Activated T-helper 1 cell treated with anti-CD3 and anti-CD28 coated beads, Interleukin-12 subunit alpha, Interleukin-12 subunit beta, Interleukin-2, Interleukin-4 antibody, amounts not matched to agents 30 ng/mL and 10 ng/mL and 1 ng/mL, durations not matched to agents 14 hours and 24 hours and 36 hours (primary cell): ENCODE measurements at regions of chr3 and their contacts with region 1.

Region 1: DNA sequence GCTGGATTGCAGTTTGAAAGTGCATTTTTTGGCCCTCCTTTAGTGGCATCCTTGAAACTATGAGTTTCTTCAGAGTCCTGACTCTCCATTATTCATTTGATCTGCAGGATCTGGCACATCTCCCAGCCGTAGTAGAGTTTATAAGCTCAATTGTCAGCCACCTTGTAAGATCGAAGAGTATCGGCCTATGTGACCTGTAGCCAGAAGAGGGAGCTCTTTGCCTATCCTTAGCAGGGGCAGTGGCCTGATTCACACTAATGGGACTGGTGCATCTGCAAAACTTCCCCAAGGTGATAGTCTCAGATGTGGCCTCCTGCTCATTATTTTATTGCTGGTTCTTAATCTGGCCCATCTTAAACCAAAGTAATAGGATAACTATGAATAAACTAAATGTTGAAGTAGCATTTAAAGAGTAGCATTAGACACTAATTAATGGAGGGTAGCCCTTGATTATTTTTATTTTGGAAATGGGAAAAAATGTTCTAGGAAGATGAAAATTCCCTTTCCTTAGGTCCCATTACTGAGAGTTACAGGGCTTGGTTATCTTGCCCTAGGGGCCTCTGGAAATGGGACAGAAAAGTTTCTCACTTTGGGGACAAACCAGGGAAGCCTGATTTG is 21.2 kb downstream of the GCSAM start:
- DNase-seq: peak; percentile 48
- H3K4me3 Mint-ChIP-seq: no peak overlapping the region
- H3K27ac Mint-ChIP-seq: no peak overlapping the region
- H3K4me1 Mint-ChIP-seq: peaks cover 17% of the 10 kb centered on the region
- H3K27me3 Mint-ChIP-seq: no peaks in the 10 kb centered on the region

Region 2: GRCh38 chr3:112074721-112075497 is 37.0 kb before region 1 on chr3:
- intact Hi-C with region 1: no loop called
- DNase-seq: peak; percentile 33
- H3K4me3 Mint-ChIP-seq: peak overlapping the region; percentile 61
- H3K27ac Mint-ChIP-seq: peak overlapping the region; percentile 68
- H3K4me1 Mint-ChIP-seq: peaks cover 49% of the 10 kb centered on the region
- H3K27me3 Mint-ChIP-seq: peaks cover 2% of the 10 kb centered on the region

Region 3: GRCh38 chr3:112136959-112137693 is 25.2 kb after region 1 on chr3:
- intact Hi-C with region 1: loop called (anchors 1 kb)
- DNase-seq: no peak
- H3K4me3 Mint-ChIP-seq: no peak overlapping the region
- H3K27ac Mint-ChIP-seq: peak overlapping the region; percentile 6
- H3K4me1 Mint-ChIP-seq: peaks cover 54% of the 10 kb centered on the region
- H3K27me3 Mint-ChIP-seq: no peaks in the 10 kb centered on the region

Region 4: DNA sequence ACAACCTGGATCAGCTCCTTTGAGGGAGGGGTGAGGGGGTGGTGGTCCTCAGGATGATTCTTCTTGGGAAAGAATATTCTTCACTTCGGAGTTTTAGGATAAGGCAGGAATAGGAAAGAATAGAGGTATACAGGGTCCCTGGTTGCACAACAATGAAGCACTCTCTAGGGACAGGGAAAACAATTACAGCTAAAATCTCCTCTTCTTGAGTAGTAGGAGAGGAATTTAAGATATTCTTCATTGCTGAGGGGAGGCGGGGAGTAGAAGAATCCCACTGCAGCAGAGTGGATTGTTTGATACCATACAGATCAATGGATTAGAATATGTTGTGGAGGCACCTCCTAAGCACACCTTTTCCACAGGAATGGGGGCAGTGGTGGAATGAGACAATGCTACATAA is 161.6 kb after region 1 on chr3:
- intact Hi-C with region 1: no loop called
- DNase-seq: no peak
- H3K4me3 Mint-ChIP-seq: no peak overlapping the region
- H3K27ac Mint-ChIP-seq: no peak overlapping the region
- H3K4me1 Mint-ChIP-seq: no peaks in the 10 kb centered on the region
- H3K27me3 Mint-ChIP-seq: peaks cover 18% of the 10 kb centered on the region

Region 5: GRCh38 chr3:112293368-112294321 is 181.8 kb after region 1 on chr3 and contains the start of gene SLC9C1:
- intact Hi-C with region 1: loop called (anchors 1 kb)
- DNase-seq: peak; percentile 36
- H3K4me3 Mint-ChIP-seq: peak within 1 kb of the TSS; percentile 72
- H3K27ac Mint-ChIP-seq: peak within 1 kb of the TSS; percentile 79
- H3K4me1 Mint-ChIP-seq: peaks cover 49% of the 10 kb centered on the region
- H3K27me3 Mint-ChIP-seq: no peaks in the 10 kb centered on the region
- total RNA-seq, gene SLC9C1: not detected in 2 replicates

Region 6: DNA sequence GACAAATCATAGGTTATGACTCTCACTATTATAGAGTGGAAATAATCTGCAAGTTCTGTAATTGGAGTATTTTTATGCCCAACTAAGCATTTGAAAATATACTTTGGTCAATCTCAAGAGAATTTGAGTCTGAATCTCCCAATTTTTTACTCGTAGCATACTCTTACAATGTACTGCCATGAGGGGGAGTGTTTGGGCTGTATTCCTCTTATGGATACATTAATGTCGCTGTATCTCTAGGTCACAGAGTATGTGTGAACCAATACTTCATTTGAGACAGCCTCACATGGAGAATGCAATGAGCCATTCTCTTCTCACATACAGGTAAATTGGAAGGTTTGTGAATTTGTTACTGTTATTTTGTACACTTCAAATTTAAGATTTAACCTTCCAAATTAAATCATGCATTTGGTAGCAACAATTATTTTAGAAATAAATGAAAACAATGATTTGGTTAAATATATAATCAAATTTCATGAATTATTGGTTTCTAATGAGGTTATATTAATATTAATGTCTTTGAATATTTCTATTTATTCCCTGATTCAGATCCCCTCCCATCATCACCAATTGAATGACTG is 215.6 kb after region 1 on chr3:
- intact Hi-C with region 1: loop called (anchors 1 kb)
- DNase-seq: peak; percentile 38
- H3K4me3 Mint-ChIP-seq: no peak overlapping the region
- H3K27ac Mint-ChIP-seq: no peak overlapping the region
- H3K4me1 Mint-ChIP-seq: no peaks in the 10 kb centered on the region
- H3K27me3 Mint-ChIP-seq: peaks cover 1% of the 10 kb centered on the region

Region 7: DNA sequence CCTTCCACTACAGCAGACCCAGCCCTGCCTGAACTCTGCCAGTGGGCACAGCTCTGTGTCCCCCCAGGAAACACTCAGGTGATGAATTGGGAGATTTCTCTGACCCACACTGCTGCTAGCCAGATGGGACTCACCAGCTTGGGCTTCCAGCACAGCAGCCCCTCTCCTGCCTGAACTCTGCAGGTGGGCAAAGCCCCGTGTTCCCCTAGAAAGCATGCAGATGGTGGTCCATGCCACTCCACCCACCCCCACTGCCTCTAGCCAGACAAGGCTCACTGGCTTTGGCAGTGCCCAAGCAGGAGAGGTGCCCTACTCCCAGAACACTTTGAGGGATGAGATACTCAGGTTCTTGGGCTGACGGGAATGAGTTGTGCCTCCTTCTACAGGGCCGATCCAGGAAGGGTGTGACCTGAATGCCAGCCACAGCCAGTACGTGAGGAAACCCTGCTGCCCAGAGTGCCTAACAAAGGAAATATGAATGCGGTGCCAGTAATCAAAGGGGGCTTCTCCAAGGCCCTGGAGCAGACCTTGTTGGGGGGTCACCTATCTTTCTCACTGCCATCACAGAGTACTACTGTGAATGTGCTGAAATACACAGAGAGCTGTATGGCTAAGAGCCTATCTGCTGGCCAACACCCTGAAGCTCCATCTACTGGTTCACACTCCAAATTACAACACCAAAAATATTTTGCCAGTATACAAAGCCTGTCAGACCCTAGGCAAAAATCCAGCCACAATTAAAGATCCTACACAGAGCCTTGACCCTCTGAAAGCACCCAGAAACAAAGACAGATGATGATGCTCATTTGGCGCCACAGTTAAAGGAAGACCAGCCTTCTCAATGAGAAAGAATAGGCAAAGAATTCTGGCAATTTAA is 325.5 kb after region 1 on chr3:
- intact Hi-C with region 1: loop called (anchors 1 kb)
- DNase-seq: peak; percentile 30
- H3K4me3 Mint-ChIP-seq: no peak overlapping the region
- H3K27ac Mint-ChIP-seq: peak overlapping the region; percentile 75
- H3K4me1 Mint-ChIP-seq: peaks cover 67% of the 10 kb centered on the region
- H3K27me3 Mint-ChIP-seq: no peaks in the 10 kb centered on the region

Region 8: DNA sequence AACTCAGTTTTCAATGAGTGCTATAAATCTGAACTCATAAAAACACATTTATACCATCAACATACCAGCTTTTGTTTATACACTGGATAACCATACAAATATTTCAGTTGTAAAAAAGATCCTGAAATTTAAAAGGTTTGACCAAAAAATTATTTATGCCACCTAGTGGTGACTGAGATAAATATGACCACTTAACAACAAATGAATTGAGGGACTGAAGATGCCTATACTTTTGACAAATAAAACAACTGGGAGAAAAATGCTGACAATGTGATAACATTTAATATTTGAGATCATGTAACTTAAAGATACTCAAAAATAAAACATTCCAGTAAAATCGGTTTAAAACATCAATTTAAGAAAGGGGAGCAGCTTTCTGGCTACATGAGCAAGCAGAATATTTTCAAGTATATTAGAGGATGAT is 419.5 kb after region 1 on chr3:
- intact Hi-C with region 1: loop called (anchors 1 kb)
- DNase-seq: no peak
- H3K4me3 Mint-ChIP-seq: no peak overlapping the region
- H3K27ac Mint-ChIP-seq: no peak overlapping the region
- H3K4me1 Mint-ChIP-seq: peaks cover 5% of the 10 kb centered on the region
- H3K27me3 Mint-ChIP-seq: no peaks in the 10 kb centered on the region